Heart right ventricle (tissue), 16 donors: ENCODE measurements at regions of chr18 and their contacts with region 1.

Region 1: DNA sequence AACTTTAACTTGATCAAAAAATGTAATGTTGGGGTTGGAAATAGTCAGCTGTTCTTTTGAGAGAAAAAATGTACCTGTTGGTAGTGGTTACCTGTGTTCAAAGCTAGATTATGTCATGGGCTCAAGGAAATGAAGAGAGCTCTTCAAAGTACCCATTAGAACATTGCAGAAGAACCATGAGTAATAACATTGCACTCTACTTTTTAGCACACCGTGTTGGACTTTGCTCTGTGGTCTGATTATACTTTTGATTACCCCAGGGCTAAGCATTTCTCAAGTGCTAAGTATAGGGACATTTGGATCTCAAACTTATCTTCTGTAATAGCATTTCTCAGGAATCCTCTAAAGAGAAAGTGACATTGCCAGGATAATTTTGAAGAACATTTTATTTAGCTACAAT is 1122.8 kb upstream of the CELF4 start:
- DNase-seq: no peak
- ATAC-seq: no peak
- H3K4me3 ChIP-seq: no peak overlapping the region
- H3K27ac ChIP-seq: no peak overlapping the region
- H3K4me1 ChIP-seq: no peaks in the 10 kb centered on the region
- H3K27me3 ChIP-seq: no peaks in the 10 kb centered on the region
- CTCF ChIP-seq: no peak

Region 2: GRCh38 chr18:38751898-38752297 is 63.5 kb after region 1 on chr18:
- intact Hi-C with region 1: loop called in 1 of 10 experiments (anchors 10 kb)
- DNase-seq: no peak
- ATAC-seq: no peak
- H3K4me3 ChIP-seq: no peak overlapping the region
- H3K27ac ChIP-seq: no peak overlapping the region
- H3K4me1 ChIP-seq: no peaks in the 10 kb centered on the region
- H3K27me3 ChIP-seq: no peaks in the 10 kb centered on the region
- CTCF ChIP-seq: no peak